ENCODE measurements at regions of chr3 and their contacts with region 1.

Region 1: GRCh38 chr3:30693470-30694120 is 87.2 kb downstream of the TGFBR2 start:
- DNase-seq: no peak
- H3K4me3 ChIP-seq: no peak overlapping the region
- H3K27ac ChIP-seq: peak overlapping the region in 1 of 4 donors; percentile 41
- H3K4me1 ChIP-seq: peaks cover 4 to 60% (median 16%) of the 10 kb centered on the region in 3 donors
- H3K27me3 ChIP-seq: no peaks in the 10 kb centered on the region
- CTCF ChIP-seq: peak; percentile 64 to 89 (median 78)
- POLR2A ChIP-seq: no peak

Region 2: GRCh38 chr3:30112902-30113484 is 580.6 kb before region 1 on chr3:
- intact Hi-C with region 1: loop called (anchors 10 kb)
- DNase-seq: no peak
- H3K4me3 ChIP-seq: no peak overlapping the region
- H3K27ac ChIP-seq: no peak overlapping the region
- H3K4me1 ChIP-seq: no peaks in the 10 kb centered on the region
- H3K27me3 ChIP-seq: no peaks in the 10 kb centered on the region
- CTCF ChIP-seq: peak in 5 of 6 experiments; percentile 34 to 73 (median 66)
- POLR2A ChIP-seq: no peak

Region 3: GRCh38 chr3:30188713-30189112 is 504.9 kb before region 1 on chr3:
- intact Hi-C with region 1: loop called (anchors 10 kb)
- DNase-seq: no peak
- H3K4me3 ChIP-seq: no peak overlapping the region
- H3K27ac ChIP-seq: no peak overlapping the region
- H3K4me1 ChIP-seq: peaks cover 0 to 11% (median 0%) of the 10 kb centered on the region in 3 donors
- H3K27me3 ChIP-seq: peaks cover 0 to 5% (median 0%) of the 10 kb centered on the region in 4 donors
- CTCF ChIP-seq: no peak
- POLR2A ChIP-seq: no peak

Region 4: DNA sequence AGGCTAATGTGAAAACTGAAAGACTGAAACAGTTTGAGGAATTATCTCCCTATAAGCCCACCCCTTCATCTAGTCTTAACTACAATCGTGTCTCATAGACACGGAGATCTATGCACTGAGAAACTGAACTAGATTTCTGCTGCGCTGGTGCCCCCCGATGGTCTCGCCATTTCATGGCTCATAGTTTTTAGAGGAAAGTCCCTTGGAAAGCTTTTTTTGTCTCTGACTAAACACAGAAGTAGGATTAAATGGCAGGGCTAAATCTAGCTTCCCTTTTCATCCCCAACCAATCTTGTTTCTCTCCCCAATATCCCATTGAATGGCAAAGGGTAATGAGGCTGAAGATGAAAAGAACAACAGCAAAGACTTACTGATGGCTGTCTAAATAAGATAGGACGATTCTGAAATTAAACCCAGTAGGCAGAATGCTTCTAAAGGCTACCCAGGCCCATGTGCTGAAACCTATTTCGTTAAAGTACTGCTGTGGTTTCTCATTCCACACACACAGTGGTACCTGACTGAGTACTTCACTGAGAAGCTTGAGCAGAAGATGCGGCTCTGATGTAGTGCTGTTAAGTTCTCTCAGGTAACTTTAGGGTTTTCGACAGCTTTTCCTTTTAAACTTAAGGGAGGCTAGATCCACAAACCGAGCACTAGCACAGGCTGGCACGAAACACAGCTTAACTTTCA is 58.2 kb after region 1 on chr3:
- intact Hi-C with region 1: no loop called
- DNase-seq: no peak
- H3K4me3 ChIP-seq: no peak overlapping the region
- H3K27ac ChIP-seq: no peak overlapping the region
- H3K4me1 ChIP-seq: peaks cover 0 to 38% (median 3%) of the 10 kb centered on the region in 3 donors
- H3K27me3 ChIP-seq: no peaks in the 10 kb centered on the region
- CTCF ChIP-seq: peak in 2 of 6 experiments; percentile 18 to 24
- POLR2A ChIP-seq: no peak